Activated CD4-positive, alpha-beta memory T cell treated with anti-CD3 and anti-CD28 coated beads, Interleukin-2, amount 10 ng/mL, durations not matched to agents 7 days and 5 days (primary cell): ENCODE measurements at regions of chr12 and their contacts with region 1.

Region 1: DNA sequence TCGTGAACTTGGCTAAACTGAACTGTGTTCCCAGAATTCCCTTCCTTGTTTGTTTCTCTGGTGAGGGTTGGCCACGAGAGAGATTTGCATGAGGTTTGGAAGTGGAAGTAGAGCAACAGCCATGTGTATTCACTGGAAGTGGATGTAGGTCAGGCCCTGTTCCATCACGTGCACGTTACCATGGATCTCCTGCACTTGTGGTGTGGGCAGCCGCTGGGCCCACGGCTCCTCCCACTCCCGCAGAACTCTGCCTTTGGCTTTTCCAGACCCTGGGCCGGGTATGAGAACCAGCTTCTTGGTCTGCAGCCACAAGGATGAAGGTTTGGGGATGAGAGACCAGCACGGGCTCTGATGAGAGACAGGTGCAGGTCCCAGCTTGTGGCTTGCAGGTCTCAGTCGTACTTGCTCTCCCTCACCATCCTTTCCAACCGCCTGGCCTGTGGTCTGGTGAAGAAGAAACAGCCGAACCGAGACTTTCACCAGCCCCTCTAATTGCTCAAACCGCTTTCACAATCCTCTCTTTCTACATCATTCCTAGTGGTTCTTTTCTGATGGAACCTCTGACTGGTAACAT is 94.9 kb downstream of the DUSP16 start:
- DNase-seq: peak; percentile 77
- H3K4me3 Mint-ChIP-seq: peak overlapping the region; percentile 40
- H3K27ac Mint-ChIP-seq: peak overlapping the region; percentile 97
- H3K4me1 Mint-ChIP-seq: peaks cover 87% of the 10 kb centered on the region
- H3K27me3 Mint-ChIP-seq: no peaks in the 10 kb centered on the region

Region 2: DNA sequence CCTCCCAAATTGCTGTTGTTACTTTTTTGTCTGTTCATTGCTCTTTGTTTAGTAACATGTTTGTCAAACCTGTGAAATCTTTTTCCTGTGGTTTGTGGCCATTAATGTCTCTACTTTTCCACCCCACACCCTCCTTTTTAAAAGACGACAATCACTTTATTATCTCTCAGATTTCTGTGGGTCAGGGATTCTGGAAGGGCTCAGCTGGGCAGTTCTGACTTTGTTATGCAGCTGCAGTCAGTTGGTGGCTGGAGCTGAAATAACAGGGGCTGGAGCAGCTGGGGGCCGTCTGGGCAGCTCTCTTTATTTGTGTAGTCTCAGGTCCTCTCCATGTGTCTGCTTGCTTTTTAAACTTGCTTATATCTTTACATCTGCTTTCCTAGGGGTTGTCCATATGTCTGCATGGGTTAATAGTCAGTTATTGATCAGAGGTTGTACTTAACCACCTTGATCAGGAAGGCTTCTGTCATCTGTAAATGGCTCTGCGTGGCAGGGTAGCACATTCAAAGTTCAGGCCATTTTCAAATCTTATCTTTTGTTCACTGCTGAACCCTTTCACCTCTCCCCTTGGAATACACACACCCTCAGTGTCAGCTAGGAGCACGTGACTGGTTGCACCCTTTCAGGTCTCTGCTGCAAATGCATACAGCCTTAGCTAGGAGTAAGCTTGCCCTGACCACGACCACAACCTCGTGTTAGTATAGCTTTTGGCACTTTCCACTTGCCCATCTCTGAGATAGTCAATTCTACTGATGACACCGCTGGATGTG is 83.0 kb before region 1 on chr12:
- CTCF ChIA-PET with region 1: interaction called, 16 read pairs
- POLR2A ChIA-PET with region 1: interaction called, 238 read pairs
- DNase-seq: peak; percentile 85
- H3K4me3 Mint-ChIP-seq: peak overlapping the region; percentile 57
- H3K27ac Mint-ChIP-seq: peak overlapping the region; percentile 97
- H3K4me1 Mint-ChIP-seq: peaks cover 83% of the 10 kb centered on the region
- H3K27me3 Mint-ChIP-seq: no peaks in the 10 kb centered on the region

Region 3: GRCh38 chr12:12456637-12457036 is 11.1 kb before region 1 on chr12:
- CTCF ChIA-PET with region 1: interaction called, 34 read pairs
- POLR2A ChIA-PET with region 1: interaction called, 579 read pairs
- DNase-seq: no peak
- H3K4me3 Mint-ChIP-seq: peak overlapping the region; percentile 46
- H3K27ac Mint-ChIP-seq: peak overlapping the region; percentile 84
- H3K4me1 Mint-ChIP-seq: peaks cover 61% of the 10 kb centered on the region
- H3K27me3 Mint-ChIP-seq: no peaks in the 10 kb centered on the region

Region 4: GRCh38 chr12:12505544-12506495 is 38.0 kb after region 1 on chr12:
- CTCF ChIA-PET with region 1: interaction called, 12 read pairs
- POLR2A ChIA-PET with region 1: interaction called, 28 read pairs
- DNase-seq: no peak
- H3K4me3 Mint-ChIP-seq: peak overlapping the region; percentile 65
- H3K27ac Mint-ChIP-seq: peak overlapping the region; percentile 81
- H3K4me1 Mint-ChIP-seq: peaks cover 76% of the 10 kb centered on the region
- H3K27me3 Mint-ChIP-seq: no peaks in the 10 kb centered on the region

Region 5: DNA sequence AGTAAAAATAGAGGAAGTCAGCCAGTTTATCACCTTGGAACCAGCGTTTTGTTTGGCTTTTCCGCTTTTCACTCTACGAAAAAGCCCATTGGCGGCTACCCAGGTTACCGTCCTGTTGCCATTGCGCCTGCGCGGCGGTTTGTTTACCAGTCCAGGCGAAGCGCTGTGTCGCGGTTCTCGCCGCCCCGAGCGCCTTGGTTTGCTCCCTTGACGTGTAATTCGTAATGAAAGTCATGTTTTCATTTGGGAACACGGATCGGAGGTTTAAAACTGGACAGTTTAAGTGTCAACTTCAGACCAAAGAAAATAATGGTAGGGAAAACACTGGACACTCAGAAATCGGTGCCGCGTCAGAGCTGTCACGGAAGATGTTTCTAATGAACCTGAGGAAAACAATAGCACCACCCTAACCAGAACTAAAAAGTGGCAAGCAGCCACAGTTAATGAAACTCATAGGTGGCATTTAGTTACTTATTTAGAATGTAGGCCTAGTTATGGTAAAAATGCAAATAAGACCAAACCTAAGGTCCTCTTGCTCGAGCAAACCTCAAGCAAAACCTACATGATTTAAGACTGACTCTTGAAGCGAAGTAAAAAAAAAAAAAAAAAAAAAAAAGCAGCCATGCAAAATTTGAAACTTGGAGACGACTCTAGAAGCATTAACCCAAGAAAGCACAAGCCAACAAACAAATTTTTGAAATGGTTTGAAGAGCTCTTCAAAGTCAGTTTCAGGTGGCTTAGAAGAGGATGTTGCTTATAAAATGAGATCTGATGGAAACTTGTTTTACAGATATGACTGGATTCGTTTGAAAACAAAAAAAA is 229.0 kb after region 1 on chr12:
- CTCF ChIA-PET with region 1: no interaction called
- POLR2A ChIA-PET with region 1: interaction called, 53 read pairs
- DNase-seq: peak; percentile 93
- H3K4me3 Mint-ChIP-seq: peak overlapping the region; percentile 83
- H3K27ac Mint-ChIP-seq: peak overlapping the region; percentile 100
- H3K4me1 Mint-ChIP-seq: peaks cover 63% of the 10 kb centered on the region
- H3K27me3 Mint-ChIP-seq: no peaks in the 10 kb centered on the region